IMR-90 (cell line): ENCODE measurements at regions of chr5 and their contacts with region 1.

Region 1: GRCh38 chr5:102778478-102778877 is 23.4 kb downstream of the PAM start:
- DNase-seq: peak; percentile 74
- ATAC-seq: peak; percentile 74
- H3K4me3 ChIP-seq: no peak overlapping the region
- H3K27ac ChIP-seq: no peak overlapping the region
- H3K4me1 ChIP-seq: no peaks in the 10 kb centered on the region; the same call in 1 of the 2 replicates
- H3K27me3 ChIP-seq: no peaks in the 10 kb centered on the region
- CTCF ChIP-seq: no peak
- POLR2A ChIP-seq: no peak
- RAD21 ChIP-seq: no peak

Region 2: DNA sequence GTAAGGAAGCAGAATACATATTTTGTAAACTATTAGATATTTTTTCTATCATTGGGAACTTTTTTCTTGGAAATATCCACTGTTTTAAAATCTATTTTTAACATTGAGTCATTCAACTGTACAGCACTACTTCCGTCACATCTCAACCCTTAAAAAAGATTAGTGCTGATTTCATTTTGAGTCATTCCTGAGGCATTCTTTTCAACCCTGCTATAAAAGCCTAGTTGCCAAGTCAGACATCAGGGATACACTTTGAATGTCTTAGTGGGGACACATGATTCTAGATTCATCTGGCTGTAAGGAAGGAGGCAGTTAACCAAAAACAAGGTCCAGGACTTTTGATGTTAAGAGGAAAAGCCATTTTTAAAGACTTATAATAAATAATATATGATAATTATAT is 180.6 kb after region 1 on chr5:
- CTCF ChIA-PET with region 1: no interaction called
- POLR2A ChIA-PET with region 1: no interaction called
- dilution Hi-C with region 1: no loop called
- in situ Hi-C with region 1: loop called (anchors 10 kb)
- intact Hi-C with region 1: no loop called
- DNase-seq: peak; percentile 95
- ATAC-seq: peak; percentile 96
- H3K4me3 ChIP-seq: no peak overlapping the region
- H3K27ac ChIP-seq: no peak overlapping the region
- H3K4me1 ChIP-seq: peaks cover 4% of the 10 kb centered on the region; the same call in 1 of the 2 replicates
- H3K27me3 ChIP-seq: no peaks in the 10 kb centered on the region
- CTCF ChIP-seq: no peak
- POLR2A ChIP-seq: peak; percentile 66
- RAD21 ChIP-seq: no peak

Region 3: GRCh38 chr5:102971697-102972293 is 193.3 kb after region 1 on chr5:
- CTCF ChIA-PET with region 1: interaction called, 3 read pairs
- POLR2A ChIA-PET with region 1: no interaction called
- dilution Hi-C with region 1: no loop called
- in situ Hi-C with region 1: loop called (anchors 10 kb)
- intact Hi-C with region 1: loop called (anchors 2 kb)
- DNase-seq: peak; percentile 70
- ATAC-seq: peak; percentile 86
- H3K4me3 ChIP-seq: no peak overlapping the region
- H3K27ac ChIP-seq: no peak overlapping the region
- H3K4me1 ChIP-seq: peaks cover 6% of the 10 kb centered on the region
- H3K27me3 ChIP-seq: no peaks in the 10 kb centered on the region
- CTCF ChIP-seq: peak; percentile 62
- POLR2A ChIP-seq: no peak
- RAD21 ChIP-seq: peak; percentile 60

Region 4: DNA sequence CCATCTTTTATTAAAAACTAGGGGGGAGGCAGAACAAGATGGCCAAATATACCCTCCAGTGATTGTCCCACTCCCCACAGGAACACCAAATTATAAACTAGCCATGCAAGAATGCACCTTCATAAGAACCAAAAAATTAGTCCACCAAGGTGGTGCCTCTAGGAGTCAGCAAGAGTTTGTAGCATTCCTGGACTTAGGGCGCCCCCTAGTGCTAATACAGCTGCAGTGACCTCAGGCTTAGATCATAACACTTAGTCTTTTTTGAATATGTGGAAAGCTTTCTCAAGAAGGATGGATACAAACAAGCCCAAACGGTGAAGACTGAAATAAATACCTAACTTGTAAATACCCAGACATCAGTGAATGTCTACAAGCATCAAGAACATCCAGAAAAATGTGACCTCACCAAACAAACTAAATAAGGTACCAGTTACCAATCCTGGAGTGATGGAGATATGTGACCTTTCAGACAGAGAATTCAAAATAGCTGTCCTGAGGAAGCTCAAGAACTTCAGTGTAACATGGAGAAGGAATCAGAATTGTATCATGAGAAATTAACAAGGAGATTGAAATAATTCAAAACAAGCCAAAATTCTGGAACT is 360.9 kb after region 1 on chr5:
- CTCF ChIA-PET with region 1: no interaction called
- POLR2A ChIA-PET with region 1: no interaction called
- dilution Hi-C with region 1: no loop called
- in situ Hi-C with region 1: no loop called
- intact Hi-C with region 1: loop called (anchors 10 kb)
- DNase-seq: peak; percentile 68
- ATAC-seq: peak; percentile 97
- H3K4me3 ChIP-seq: no peak overlapping the region
- H3K27ac ChIP-seq: no peak overlapping the region
- H3K4me1 ChIP-seq: no peaks in the 10 kb centered on the region
- H3K27me3 ChIP-seq: no peaks in the 10 kb centered on the region
- CTCF ChIP-seq: peak; percentile 91
- POLR2A ChIP-seq: no peak
- RAD21 ChIP-seq: peak; percentile 95